CD14-positive monocyte (primary cell): ENCODE measurements at regions of chr6 and their contacts with region 1.

Region 1: DNA sequence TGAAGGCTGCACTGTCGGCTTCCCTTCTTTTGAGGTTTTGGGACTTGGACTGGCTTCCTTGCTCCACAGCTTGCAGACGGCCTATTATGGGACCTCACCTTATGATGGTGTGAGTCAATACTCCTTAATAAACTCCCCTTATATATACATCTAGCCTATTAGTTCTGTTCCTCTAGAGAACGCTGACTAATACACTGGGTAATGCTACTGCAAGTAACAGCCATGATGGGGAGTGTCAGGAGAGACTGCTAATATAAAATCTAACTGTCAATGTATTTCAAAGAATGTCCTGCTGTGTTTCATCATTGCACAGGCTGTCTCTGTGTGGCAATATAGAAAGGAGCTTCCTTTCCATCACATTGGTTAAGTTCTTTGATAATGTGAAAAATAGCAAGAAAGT is 57.7 kb upstream of the UST start:
- DNase-seq: no peak
- H3K4me3 ChIP-seq: no peak overlapping the region
- H3K4me3 Mint-ChIP-seq: no peak overlapping the region
- H3K27ac ChIP-seq: no peak overlapping the region
- H3K27ac Mint-ChIP-seq: no peak overlapping the region
- H3K4me1 ChIP-seq: peaks cover 12 to 16% of the 10 kb centered on the region in 2 donors
- H3K4me1 Mint-ChIP-seq: peaks cover 18% of the 10 kb centered on the region
- H3K27me3 ChIP-seq: no peaks in the 10 kb centered on the region
- H3K27me3 Mint-ChIP-seq: peaks cover 0 to 5% (median 0%) of the 10 kb centered on the region in 3 donors
- CTCF ChIP-seq: no peak

Region 2: GRCh38 chr6:148649454-148649963 is 39.7 kb before region 1 on chr6:
- intact Hi-C with region 1: loop called in 1 of 2 experiments (anchors 5 kb)
- DNase-seq: peak; percentile 12 to 26 (median 16)
- H3K4me3 ChIP-seq: peak overlapping the region in 1 of 3 experiments; percentile 47
- H3K4me3 Mint-ChIP-seq: peak overlapping the region; percentile 55 to 78
- H3K27ac ChIP-seq: peak overlapping the region; percentile 30 to 65
- H3K27ac Mint-ChIP-seq: peak overlapping the region; percentile 54 to 94 (median 89)
- H3K4me1 ChIP-seq: peaks cover 29 to 36% of the 10 kb centered on the region in 2 donors
- H3K4me1 Mint-ChIP-seq: peaks cover 29% of the 10 kb centered on the region
- H3K27me3 ChIP-seq: no peaks in the 10 kb centered on the region
- H3K27me3 Mint-ChIP-seq: peaks cover 0 to 2% (median 2%) of the 10 kb centered on the region in 3 donors
- CTCF ChIP-seq: no peak

Region 3: DNA sequence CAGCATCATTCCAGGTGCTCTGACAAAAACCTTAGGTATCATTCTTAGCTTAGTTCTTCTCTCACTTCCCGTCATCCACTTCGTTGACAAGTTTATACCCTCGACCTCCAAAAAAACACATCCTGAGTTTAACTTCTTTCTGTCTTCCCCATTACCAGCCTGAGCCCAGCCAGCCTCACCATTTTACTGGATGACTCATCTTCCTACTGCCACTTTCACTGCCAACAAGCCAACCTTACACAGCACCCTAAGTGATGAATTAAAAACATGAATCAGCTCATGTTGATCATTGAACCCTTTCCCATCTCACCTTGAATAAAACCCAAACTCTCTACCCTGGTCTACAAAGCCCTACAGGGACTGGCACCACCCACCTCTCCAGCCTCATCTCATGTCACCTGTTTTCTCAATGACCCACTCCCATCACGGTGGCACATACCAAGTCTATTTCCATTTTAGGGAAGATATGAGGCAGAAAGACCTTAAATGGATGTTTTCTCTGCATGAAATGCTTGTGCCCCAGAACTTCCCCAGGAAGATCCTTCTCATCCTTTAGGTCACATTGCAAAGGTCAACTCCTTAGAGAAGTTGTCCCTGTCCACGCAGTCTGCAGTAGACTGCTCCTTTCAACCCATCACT is 47.7 kb after region 1 on chr6:
- intact Hi-C with region 1: no loop called
- DNase-seq: peak in 2 of 3 donors; percentile 10 to 36
- H3K4me3 ChIP-seq: no peak overlapping the region
- H3K4me3 Mint-ChIP-seq: no peak overlapping the region
- H3K27ac ChIP-seq: no peak overlapping the region
- H3K27ac Mint-ChIP-seq: peak overlapping the region in 1 of 7 donors; percentile 58
- H3K4me1 ChIP-seq: peaks cover 7 to 10% of the 10 kb centered on the region in 2 donors
- H3K4me1 Mint-ChIP-seq: peaks cover 24% of the 10 kb centered on the region
- H3K27me3 ChIP-seq: no peaks in the 10 kb centered on the region
- H3K27me3 Mint-ChIP-seq: peaks cover 1 to 8% (median 3%) of the 10 kb centered on the region in 3 donors
- CTCF ChIP-seq: no peak

Region 4: DNA sequence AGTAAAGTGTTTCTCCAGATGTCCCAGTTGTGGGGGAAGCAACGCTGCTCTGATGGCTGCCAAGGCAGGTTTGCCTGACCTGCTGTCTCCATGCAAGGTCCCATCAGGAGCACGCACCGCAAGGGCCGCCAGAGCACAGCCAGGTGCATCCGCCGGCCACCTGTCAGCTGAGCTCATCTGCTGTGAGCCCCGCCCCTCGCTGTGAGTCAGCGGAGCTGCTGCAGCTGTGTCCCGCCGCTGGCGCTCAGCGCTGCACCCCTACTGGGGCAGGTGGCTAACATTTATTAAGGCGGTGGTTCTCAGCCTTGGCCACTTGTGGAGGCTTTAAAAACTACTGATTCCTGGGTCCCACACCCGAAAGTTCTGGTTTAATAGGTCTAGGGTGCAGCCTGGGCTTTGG is 283.3 kb after region 1 on chr6:
- intact Hi-C with region 1: no loop called
- DNase-seq: no peak
- H3K4me3 ChIP-seq: no peak overlapping the region
- H3K4me3 Mint-ChIP-seq: no peak overlapping the region
- H3K27ac ChIP-seq: no peak overlapping the region
- H3K27ac Mint-ChIP-seq: no peak overlapping the region
- H3K4me1 ChIP-seq: no peaks in the 10 kb centered on the region
- H3K4me1 Mint-ChIP-seq: peaks cover 4% of the 10 kb centered on the region
- H3K27me3 ChIP-seq: peaks cover 0 to 12% of the 10 kb centered on the region in 2 donors
- H3K27me3 Mint-ChIP-seq: peaks cover 14 to 18% (median 17%) of the 10 kb centered on the region in 3 donors
- CTCF ChIP-seq: no peak